ENCODE measurements at regions of chr11 and their contacts with region 1.

Region 1: GRCh38 chr11:59171508-59172322 is at the start of gene DTX4:
- DNase-seq: peak; percentile 85 to 90
- ATAC-seq: peak; percentile 87 to 94
- H3K4me3 ChIP-seq: peak within 1 kb of the TSS; percentile 80
- H3K27ac ChIP-seq: peak within 1 kb of the TSS; percentile 75 to 93
- H3K4me1 ChIP-seq: peaks cover 26% of the 10 kb centered on the region
- CTCF ChIP-seq: peak; percentile 36
- EP300 ChIP-seq: no peak
- POLR2A ChIP-seq: peak; percentile 50
- RAD21 ChIP-seq: peak; percentile 83 to 90
- polyA plus RNA-seq, gene DTX4: 0.97 and 2.2 TPM in 2 replicates

Region 2: DNA sequence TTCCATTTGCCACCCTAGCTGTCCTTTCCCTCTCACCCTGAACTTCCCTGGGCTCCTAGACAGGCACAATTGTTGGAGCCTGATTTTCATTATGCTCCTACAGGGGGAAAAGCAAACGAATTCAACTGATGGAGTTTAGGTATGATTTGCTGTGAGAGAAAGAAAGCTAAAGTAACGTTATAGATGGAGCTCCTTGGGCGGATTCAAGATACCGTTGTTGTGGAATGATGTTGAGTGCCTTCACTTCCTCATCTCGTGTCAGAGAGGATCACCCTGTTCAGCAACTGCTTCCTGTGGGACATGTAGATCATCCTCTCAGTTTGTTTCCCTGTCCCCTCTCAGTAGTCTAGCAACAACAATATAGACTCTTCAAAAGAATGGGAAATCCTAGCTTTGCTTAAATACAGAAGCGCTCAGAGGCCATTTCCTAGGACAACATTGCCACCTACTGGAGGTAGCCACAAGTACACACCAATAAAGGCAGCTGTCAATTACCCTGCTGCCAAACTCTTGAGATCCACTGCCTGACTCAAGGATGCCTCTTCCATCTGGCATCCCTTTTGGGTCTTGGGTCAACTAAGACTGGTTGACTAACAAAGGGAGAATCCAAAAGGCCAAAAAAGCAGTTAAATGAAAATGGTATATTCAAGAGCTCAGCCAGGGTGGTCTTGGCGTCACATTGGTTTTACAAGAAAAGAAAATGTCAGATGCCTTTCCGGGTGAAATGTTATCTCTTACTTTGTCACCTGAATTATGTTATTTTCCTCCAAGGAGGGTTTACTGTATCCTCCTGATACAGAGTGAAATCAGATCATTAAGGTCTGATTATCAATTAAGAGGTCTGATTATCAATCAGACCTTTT is 13.3 kb before region 1 on chr11:
- CTCF ChIA-PET with region 1: interaction called, 56 read pairs
- POLR2A ChIA-PET with region 1: no interaction called
- DNase-seq: peak; percentile 72 to 74
- ATAC-seq: peak; percentile 94 to 97
- H3K4me3 ChIP-seq: no peak overlapping the region
- H3K27ac ChIP-seq: no peak overlapping the region
- H3K4me1 ChIP-seq: no peaks in the 10 kb centered on the region
- CTCF ChIP-seq: peak; percentile 87
- EP300 ChIP-seq: no peak
- POLR2A ChIP-seq: no peak
- RAD21 ChIP-seq: peak; percentile 86 to 90

Region 3: DNA sequence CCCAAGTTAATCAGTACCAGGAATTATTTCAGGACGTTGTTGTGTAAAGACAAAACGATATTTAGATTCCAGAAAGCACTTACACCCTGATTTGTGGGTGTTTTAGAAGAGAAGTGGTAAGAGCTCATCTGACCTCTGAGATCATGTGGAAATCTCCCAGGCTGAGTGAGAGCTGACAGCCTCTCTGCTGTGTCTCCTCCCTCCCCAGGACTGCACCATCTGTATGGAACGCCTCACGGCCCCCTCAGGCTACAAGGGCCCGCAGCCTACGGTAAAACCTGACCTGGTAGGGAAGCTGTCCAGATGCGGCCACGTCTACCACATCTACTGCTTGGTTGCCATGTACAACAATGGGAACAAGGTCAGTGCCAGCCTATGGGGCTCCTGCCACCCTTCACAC is 20.2 kb after region 1 on chr11:
- CTCF ChIA-PET with region 1: interaction called, 40 read pairs
- POLR2A ChIA-PET with region 1: interaction called, 5 read pairs
- DNase-seq: no peak
- ATAC-seq: no peak
- H3K4me3 ChIP-seq: no peak overlapping the region
- H3K27ac ChIP-seq: no peak overlapping the region
- H3K4me1 ChIP-seq: 0 out of 3 replicates have a peak, but pooled peaks cover 5% of the 10 kb centered on the region
- CTCF ChIP-seq: no peak
- EP300 ChIP-seq: no peak
- POLR2A ChIP-seq: no peak
- RAD21 ChIP-seq: no peak

Region 4: DNA sequence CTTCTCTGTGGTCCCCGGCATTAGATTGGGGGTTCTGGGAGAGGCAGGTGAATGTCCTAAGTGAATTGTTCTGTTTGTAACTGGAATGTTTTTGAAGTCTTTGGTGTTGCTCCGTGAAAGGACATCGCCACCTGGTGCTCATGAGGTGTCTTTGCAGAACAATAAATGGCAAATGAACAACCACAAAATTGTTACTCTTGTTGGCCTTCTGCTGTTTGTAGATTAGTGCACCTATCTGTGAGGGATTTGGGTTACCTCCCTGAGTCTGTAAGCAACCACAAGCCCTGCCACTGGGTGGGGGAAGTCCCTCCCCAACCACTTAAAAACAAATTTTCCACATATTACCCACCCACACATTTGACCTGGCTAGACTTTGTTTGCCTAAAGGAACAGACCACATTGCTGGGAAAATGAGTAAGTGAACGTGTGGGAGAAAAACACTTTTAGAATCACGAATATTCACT is 36.3 kb after region 1 on chr11:
- CTCF ChIA-PET with region 1: interaction called, 161 read pairs
- POLR2A ChIA-PET with region 1: no interaction called
- DNase-seq: peak; percentile 17 to 65
- ATAC-seq: peak; percentile 62 to 75; a peak in 5 of 6 replicates
- H3K4me3 ChIP-seq: no peak overlapping the region
- H3K27ac ChIP-seq: no peak overlapping the region
- H3K4me1 ChIP-seq: no peaks in the 10 kb centered on the region
- CTCF ChIP-seq: peak; percentile 68
- EP300 ChIP-seq: no peak
- POLR2A ChIP-seq: no peak
- RAD21 ChIP-seq: peak; percentile 64 to 70

Region 5: DNA sequence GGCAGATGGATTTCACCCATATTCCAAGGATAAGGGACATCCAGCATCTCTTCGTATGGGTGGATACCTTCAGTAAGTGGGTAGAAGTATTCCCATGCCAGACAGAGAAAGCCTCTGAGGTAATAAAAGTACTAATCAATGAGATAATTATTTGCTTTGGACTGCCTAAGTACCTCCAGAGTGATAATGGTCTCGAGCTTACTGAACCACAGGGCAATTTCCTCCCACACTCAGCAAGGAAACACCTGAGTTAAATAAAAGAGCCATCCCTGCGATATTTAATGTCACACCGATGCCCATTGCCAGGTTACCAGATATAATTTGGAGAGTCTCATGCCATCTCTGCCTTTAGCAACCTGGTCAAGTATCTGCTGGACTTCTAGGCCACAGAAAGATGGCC is 111.6 kb after region 1 on chr11:
- CTCF ChIA-PET with region 1: interaction called, 12 read pairs
- POLR2A ChIA-PET with region 1: no interaction called
- DNase-seq: no peak
- ATAC-seq: no peak
- H3K4me3 ChIP-seq: no peak overlapping the region
- H3K27ac ChIP-seq: no peak overlapping the region
- H3K4me1 ChIP-seq: no peaks in the 10 kb centered on the region
- CTCF ChIP-seq: no peak
- EP300 ChIP-seq: no peak
- POLR2A ChIP-seq: no peak
- RAD21 ChIP-seq: no peak

Measured in A549 (cell line).